ENCODE measurements at regions of chr9 and their contacts with region 1.

Region 1: GRCh38 chr9:119853126-119853525 is 483.9 kb upstream of the BRINP1 start:
- DNase-seq: no peak
- H3K4me3 ChIP-seq: no peak overlapping the region
- H3K27ac ChIP-seq: no peak overlapping the region
- H3K4me1 ChIP-seq: no peaks in the 10 kb centered on the region
- H3K27me3 ChIP-seq: no peaks in the 10 kb centered on the region
- CTCF ChIP-seq: no peak
- POLR2A ChIP-seq: no peak

Region 2: GRCh38 chr9:118230319-118230718 is 1622.8 kb before region 1 on chr9:
- intact Hi-C with region 1: no loop called
- DNase-seq: no peak
- H3K4me3 ChIP-seq: no peak overlapping the region
- H3K27ac ChIP-seq: no peak overlapping the region
- H3K4me1 ChIP-seq: no peaks in the 10 kb centered on the region
- H3K27me3 ChIP-seq: no peaks in the 10 kb centered on the region
- CTCF ChIP-seq: no peak
- POLR2A ChIP-seq: no peak

Region 3: GRCh38 chr9:119898316-119898715 is 45.2 kb after region 1 on chr9:
- intact Hi-C with region 1: no loop called
- DNase-seq: no peak
- H3K4me3 ChIP-seq: no peak overlapping the region
- H3K27ac ChIP-seq: no peak overlapping the region
- H3K4me1 ChIP-seq: no peaks in the 10 kb centered on the region
- H3K27me3 ChIP-seq: no peaks in the 10 kb centered on the region
- CTCF ChIP-seq: no peak
- POLR2A ChIP-seq: no peak

Region 4: GRCh38 chr9:120348951-120349429 is 495.9 kb after region 1 on chr9:
- intact Hi-C with region 1: loop called (anchors 5 kb)
- DNase-seq: no peak
- H3K4me3 ChIP-seq: no peak overlapping the region
- H3K27ac ChIP-seq: no peak overlapping the region
- H3K4me1 ChIP-seq: no peaks in the 10 kb centered on the region
- H3K27me3 ChIP-seq: no peaks in the 10 kb centered on the region
- CTCF ChIP-seq: peak in 2 of 3 donors; percentile 38 to 41
- POLR2A ChIP-seq: no peak